GM23248 (cell line): ENCODE measurements at regions of chr1 and their contacts with region 1.

Region 1: GRCh38 chr1:178542560-178543356 is 29.8 kb downstream of the TEX35 start:
- DNase-seq: peak; percentile 91
- H3K4me3 ChIP-seq: peak overlapping the region; percentile 77
- H3K27ac ChIP-seq: peak overlapping the region; percentile 53
- H3K4me1 ChIP-seq: peaks cover 48% of the 10 kb centered on the region
- H3K27me3 ChIP-seq: no peaks in the 10 kb centered on the region

Region 2: GRCh38 chr1:178749581-178750166 is 206.9 kb after region 1 on chr1:
- in situ Hi-C with region 1: loop called (anchors 10 kb)
- DNase-seq: peak; percentile 40
- H3K4me3 ChIP-seq: no peak overlapping the region
- H3K27ac ChIP-seq: no peak overlapping the region
- H3K4me1 ChIP-seq: peaks cover 7% of the 10 kb centered on the region
- H3K27me3 ChIP-seq: no peaks in the 10 kb centered on the region

Region 3: DNA sequence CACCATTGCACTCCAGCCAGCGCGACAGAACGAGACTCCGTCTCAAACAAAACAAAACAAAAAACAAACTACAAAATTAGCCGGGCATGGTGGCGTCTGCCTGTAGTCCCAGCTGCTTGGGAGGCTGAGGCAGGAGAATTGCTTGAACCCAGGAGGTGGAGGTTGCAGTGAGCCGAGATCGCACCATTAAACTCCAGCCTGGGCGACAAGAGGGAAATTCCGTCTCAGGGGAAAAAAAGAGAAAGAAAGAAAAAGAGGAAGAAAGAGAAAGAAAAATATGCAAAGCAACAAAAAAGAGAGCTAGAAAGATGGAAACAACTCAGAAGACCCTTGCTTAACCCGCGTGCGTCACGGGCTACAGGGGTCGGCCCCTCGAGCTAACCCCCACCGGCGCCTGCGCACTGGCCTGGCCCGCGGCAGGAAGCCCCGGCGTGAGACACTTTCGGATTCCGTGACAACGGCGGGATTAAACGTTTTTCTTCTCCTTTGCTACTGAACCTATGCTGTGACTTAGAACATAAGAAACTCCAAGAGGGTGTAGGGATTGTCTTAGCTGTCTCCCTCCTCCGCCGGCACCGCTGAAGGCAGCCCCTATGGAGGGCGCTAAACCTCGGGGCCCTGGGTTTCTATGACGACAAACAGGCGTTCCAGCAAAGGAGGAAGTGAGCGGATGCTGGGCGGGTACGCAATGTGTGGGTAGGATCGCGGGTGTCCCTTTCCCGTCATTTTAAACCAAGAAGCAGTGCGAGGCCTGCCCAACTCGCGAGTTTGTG is 822.7 kb after region 1 on chr1 and contains the start of gene AXDND1:
- in situ Hi-C with region 1: loop called (anchors 25 kb)
- DNase-seq: peak; percentile 95
- H3K4me3 ChIP-seq: peak within 1 kb of the TSS; percentile 93
- H3K27ac ChIP-seq: peak within 1 kb of the TSS; percentile 94
- H3K4me1 ChIP-seq: no peaks in the 10 kb centered on the region
- H3K27me3 ChIP-seq: no peaks in the 10 kb centered on the region
- total RNA-seq, gene AXDND1: not detected in 2 replicates